OCI-LY7 (cell line): ENCODE measurements at regions of chr10 and their contacts with region 1.

Region 1: DNA sequence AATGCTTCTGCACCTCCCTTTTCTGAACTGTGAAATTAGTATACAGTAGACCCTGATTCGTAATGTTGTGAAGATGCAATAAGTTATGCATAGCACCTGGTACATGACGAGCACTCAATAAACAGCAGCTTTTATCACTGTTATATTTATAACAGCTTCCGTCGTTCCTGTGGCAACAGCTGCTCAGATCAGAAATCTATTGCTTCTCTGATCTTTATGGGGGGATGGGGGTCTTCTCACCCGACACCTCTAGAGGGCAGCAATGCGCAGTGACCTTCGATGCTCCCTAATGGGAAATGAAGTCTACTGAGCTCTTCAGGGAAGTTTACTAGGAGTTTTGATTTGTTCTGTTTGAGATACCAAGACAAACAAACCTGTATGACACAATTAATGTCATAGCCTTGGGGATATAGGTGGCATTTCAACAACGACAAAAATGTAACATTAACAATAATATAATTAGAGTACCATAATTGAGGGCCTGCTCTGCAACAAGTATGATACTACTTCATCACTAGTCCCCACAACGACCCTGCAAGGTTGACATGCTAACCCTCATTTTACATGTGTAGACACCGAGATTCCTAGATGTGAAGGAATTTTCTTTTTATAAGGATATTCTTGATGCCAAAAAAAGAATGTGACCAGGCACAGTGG is 289.6 kb downstream of the SFMBT2 start:
- DNase-seq: peak; percentile 78
- H3K4me3 ChIP-seq: no peak overlapping the region
- H3K27ac ChIP-seq: no peak overlapping the region
- H3K4me1 ChIP-seq: peaks cover 4% of the 10 kb centered on the region
- CTCF ChIP-seq: peak; percentile 98

Region 2: GRCh38 chr10:7075110-7075509 is 46.2 kb before region 1 on chr10:
- CTCF ChIA-PET with region 1: no interaction called
- POLR2A ChIA-PET with region 1: no interaction called
- intact Hi-C with region 1: no loop called
- DNase-seq: no peak
- H3K4me3 ChIP-seq: no peak overlapping the region
- H3K27ac ChIP-seq: no peak overlapping the region
- H3K4me1 ChIP-seq: no peaks in the 10 kb centered on the region
- CTCF ChIP-seq: no peak

Region 3: GRCh38 chr10:7161484-7162250 is 40.4 kb after region 1 on chr10:
- CTCF ChIA-PET with region 1: no interaction called
- POLR2A ChIA-PET with region 1: no interaction called
- intact Hi-C with region 1: no loop called
- DNase-seq: no peak
- H3K4me3 ChIP-seq: no peak overlapping the region
- H3K27ac ChIP-seq: no peak overlapping the region
- H3K4me1 ChIP-seq: peaks cover 9% of the 10 kb centered on the region
- CTCF ChIP-seq: no peak

Region 4: DNA sequence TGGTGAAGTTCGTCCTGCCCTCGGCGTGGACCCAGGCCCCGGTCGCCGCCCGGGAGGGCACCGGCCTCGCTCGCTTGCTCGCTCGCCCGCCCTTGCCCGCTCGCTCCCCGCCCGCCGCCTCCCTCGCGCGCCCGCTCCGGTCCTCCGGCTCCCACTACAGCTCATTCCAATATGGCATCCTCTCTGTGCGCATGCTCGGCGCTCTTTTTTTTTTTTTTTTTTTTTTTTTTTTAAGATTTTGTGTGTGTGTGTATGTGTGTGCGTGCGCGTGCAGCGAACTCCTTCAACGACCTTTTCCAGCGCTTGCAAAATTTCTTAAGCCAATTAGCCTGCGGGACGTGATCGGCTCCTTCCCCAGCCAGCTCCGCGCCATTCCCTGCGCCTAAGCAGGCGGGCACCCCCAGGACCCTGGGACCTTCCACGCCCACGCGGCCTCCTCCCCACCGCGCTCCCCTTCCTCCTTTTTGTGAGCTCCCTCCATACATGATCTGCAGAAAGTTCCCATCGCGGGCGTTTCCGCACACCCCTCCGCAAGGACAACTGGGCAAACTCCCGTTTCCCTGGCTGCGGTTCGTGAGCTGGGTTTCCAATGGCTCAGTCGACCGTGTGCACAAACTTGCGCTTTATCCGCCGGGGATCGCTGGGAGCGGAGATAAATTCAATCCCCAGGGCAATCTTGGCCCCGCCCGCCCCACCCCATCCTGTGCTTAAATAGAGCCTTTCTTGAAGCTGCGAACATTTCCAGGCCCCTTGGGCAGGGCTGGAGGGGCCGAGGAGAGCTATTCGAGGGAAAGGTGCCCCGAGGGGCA is 289.8 kb after region 1 on chr10 and contains the start of gene SFMBT2:
- CTCF ChIA-PET with region 1: no interaction called
- POLR2A ChIA-PET with region 1: no interaction called
- intact Hi-C with region 1: loop called (anchors 2 kb)
- DNase-seq: peak; percentile 77
- H3K4me3 ChIP-seq: peak within 1 kb of the TSS; percentile 95
- H3K27ac ChIP-seq: no peak within 1 kb of the TSS
- H3K4me1 ChIP-seq: peaks cover 16% of the 10 kb centered on the region
- CTCF ChIP-seq: no peak
- total RNA-seq, gene SFMBT2: 5.1 and 7.9 TPM in 2 replicates

Region 5: DNA sequence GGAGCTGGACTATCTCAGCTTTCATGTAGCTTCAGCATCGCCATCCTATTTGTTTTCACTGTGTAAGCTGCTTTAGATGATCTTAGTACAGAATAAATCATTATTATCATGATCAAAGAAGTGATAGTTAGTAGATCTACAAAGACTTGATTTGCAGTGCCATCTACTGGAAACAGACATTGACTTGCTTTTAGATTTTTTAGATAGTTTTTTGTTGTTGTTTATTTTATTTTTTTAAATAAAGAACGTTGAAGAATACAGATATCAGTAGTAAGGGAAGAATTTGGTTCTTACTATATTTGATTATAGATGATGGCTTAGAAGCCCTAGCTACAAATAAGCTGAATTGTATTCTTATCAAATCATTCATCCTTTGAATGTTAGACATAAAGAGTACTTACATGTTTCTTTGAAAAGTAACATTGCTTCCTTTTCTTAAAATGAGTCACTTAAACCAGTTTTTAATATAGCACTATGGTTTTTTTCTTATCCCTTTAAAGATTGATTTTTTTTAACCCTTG is 295.9 kb after region 1 on chr10:
- CTCF ChIA-PET with region 1: no interaction called
- POLR2A ChIA-PET with region 1: no interaction called
- intact Hi-C with region 1: loop called (anchors 1 kb)
- DNase-seq: peak; percentile 61
- H3K4me3 ChIP-seq: no peak overlapping the region
- H3K27ac ChIP-seq: no peak overlapping the region
- H3K4me1 ChIP-seq: peaks cover 3% of the 10 kb centered on the region
- CTCF ChIP-seq: peak; percentile 98

Region 6: DNA sequence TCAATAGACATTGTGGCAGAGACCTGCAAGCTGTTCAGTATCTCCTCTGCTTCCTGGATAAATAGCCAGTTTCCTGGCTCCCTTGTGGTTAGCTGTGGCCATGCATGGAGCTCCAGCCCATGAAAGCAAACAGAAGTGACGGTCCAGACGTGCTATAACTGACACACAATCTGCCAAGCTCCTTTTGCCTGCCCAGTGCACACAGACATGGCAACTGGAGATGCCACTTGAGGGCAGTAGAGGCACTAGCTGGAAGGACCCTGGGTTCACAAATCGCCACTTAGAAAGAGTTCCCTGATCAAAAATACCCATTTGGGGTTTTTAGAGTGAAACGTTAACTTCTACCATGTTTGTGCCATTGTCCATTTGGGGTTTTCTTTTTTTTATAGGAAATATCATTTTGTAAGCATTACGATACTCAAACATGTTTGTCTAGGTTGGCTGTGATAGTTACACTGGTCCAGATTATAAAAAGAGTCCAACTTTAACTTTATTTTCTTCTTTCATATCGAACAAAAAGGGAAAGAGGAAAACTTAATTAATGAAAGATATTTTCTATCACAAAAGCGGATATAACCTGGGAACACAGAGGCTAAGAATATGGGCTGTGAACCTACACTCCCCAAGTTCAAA is 635.2 kb after region 1 on chr10:
- CTCF ChIA-PET with region 1: no interaction called
- POLR2A ChIA-PET with region 1: no interaction called
- intact Hi-C with region 1: no loop called
- DNase-seq: peak; percentile 41
- H3K4me3 ChIP-seq: no peak overlapping the region
- H3K27ac ChIP-seq: no peak overlapping the region
- H3K4me1 ChIP-seq: no peaks in the 10 kb centered on the region
- CTCF ChIP-seq: peak; percentile 82